A549 (cell line): ENCODE measurements at regions of chr11 and their contacts with region 1.

Region 1: GRCh38 chr11:124758317-124759203 is 3.5 kb downstream of the ESAM start:
- DNase-seq: peak; percentile 77 to 81
- ATAC-seq: peak; percentile 83 to 90
- H3K4me3 ChIP-seq: peak overlapping the region; percentile 52
- H3K27ac ChIP-seq: peak overlapping the region; percentile 72 to 85
- H3K4me1 ChIP-seq: peaks cover 19% of the 10 kb centered on the region
- CTCF ChIP-seq: peak; percentile 58
- EP300 ChIP-seq: no peak
- POLR2A ChIP-seq: no peak
- RAD21 ChIP-seq: peak; percentile 50 to 53; a peak in 4 of 5 replicates

Region 2: GRCh38 chr11:124493016-124493655 is 265.4 kb before region 1 on chr11:
- CTCF ChIA-PET with region 1: no interaction called
- POLR2A ChIA-PET with region 1: no interaction called
- DNase-seq: no peak
- ATAC-seq: no peak
- H3K4me3 ChIP-seq: no peak overlapping the region
- H3K27ac ChIP-seq: no peak overlapping the region
- H3K4me1 ChIP-seq: no peaks in the 10 kb centered on the region
- CTCF ChIP-seq: no peak
- EP300 ChIP-seq: no peak
- POLR2A ChIP-seq: no peak
- RAD21 ChIP-seq: no peak

Region 3: DNA sequence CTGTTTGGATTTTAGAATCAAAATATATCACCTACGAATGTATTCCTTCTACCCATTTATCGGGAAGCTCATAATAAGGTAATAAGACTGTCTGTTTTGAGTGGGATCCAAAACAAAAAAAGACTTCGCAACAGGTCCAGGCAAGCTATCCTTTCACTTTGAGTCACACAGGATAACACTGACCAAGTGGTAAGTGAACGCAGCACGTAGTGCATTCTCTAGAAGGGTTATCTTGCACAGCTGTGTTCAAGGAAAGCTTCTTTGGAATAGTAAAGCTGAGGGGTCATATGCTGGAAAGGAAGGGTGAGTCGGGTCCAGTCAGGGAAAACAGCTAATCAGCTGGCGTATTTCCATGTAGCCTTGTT is 41.2 kb before region 1 on chr11:
- CTCF ChIA-PET with region 1: no interaction called
- POLR2A ChIA-PET with region 1: no interaction called
- DNase-seq: no peak
- ATAC-seq: no peak; a peak in 1 of 6 replicates
- H3K4me3 ChIP-seq: no peak overlapping the region
- H3K27ac ChIP-seq: no peak overlapping the region
- H3K4me1 ChIP-seq: no peaks in the 10 kb centered on the region
- CTCF ChIP-seq: no peak
- EP300 ChIP-seq: no peak
- POLR2A ChIP-seq: no peak
- RAD21 ChIP-seq: no peak

Region 4: DNA sequence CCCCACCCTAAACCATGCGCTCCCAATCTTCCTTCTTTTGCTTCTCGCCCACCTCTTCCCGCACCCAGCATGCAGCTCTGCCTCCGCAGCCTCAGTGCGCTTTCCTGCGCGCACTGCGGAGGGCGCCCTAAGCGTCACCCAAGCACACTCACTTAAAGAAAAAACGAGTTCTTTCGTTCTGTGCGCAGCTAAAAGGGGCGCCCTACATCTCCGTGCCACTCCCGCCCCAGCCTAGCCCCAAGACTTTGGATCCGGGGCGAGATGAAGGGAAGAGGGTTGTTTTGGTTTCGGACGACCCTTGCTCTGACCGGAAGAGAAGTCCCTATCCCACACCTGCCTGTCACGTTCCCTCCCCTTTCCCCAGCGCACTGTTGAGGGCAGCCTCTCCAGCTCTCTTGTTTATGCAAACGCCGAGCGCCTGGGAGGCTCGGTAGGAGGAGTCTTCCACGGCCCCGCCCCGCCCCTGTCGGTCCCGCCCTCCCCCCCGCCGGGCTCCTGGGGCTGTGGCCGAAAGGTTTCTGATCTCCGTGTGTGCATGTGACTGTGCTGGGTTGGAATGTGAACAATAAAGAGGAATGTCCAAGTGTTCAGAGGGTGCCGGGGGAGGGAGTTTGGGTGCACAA is 11.8 kb before region 1 on chr11:
- CTCF ChIA-PET with region 1: interaction called, 39 read pairs
- POLR2A ChIA-PET with region 1: interaction called, 9 read pairs
- DNase-seq: peak; percentile 84 to 85
- ATAC-seq: peak; percentile 89 to 92
- H3K4me3 ChIP-seq: peak overlapping the region; percentile 66
- H3K27ac ChIP-seq: peak overlapping the region; percentile 79 to 93
- H3K4me1 ChIP-seq: peaks cover 6% of the 10 kb centered on the region; the same call in 2 of the 3 replicates
- CTCF ChIP-seq: peak; percentile 57
- EP300 ChIP-seq: no peak
- POLR2A ChIP-seq: no peak
- RAD21 ChIP-seq: peak in 1 of 2 experiments; percentile 21; a peak in 3 of 5 replicates

Region 5: GRCh38 chr11:124778281-124778680 is 19.7 kb after region 1 on chr11:
- CTCF ChIA-PET with region 1: interaction called, 13 read pairs
- POLR2A ChIA-PET with region 1: no interaction called
- DNase-seq: peak; percentile 21 to 25
- ATAC-seq: peak; percentile 50 to 60; a peak in 2 of 6 replicates
- H3K4me3 ChIP-seq: no peak overlapping the region
- H3K27ac ChIP-seq: no peak overlapping the region
- H3K4me1 ChIP-seq: no peaks in the 10 kb centered on the region
- CTCF ChIP-seq: 0 out of 3 replicates have a peak, but pooled peaks have one; percentile 10
- EP300 ChIP-seq: no peak
- POLR2A ChIP-seq: no peak
- RAD21 ChIP-seq: no peak

Region 6: GRCh38 chr11:124793466-124794278 is 35.1 kb after region 1 on chr11:
- CTCF ChIA-PET with region 1: interaction called, 45 read pairs
- POLR2A ChIA-PET with region 1: no interaction called
- DNase-seq: peak; percentile 40 to 62
- ATAC-seq: peak; percentile 59 to 88; a peak in 4 of 6 replicates
- H3K4me3 ChIP-seq: no peak overlapping the region
- H3K27ac ChIP-seq: no peak overlapping the region
- H3K4me1 ChIP-seq: peaks cover 31% of the 10 kb centered on the region
- CTCF ChIP-seq: peak; percentile 70
- EP300 ChIP-seq: no peak
- POLR2A ChIP-seq: no peak
- RAD21 ChIP-seq: peak; percentile 65 to 72

Region 7: GRCh38 chr11:124865921-124866583 is 107.5 kb after region 1 on chr11:
- CTCF ChIA-PET with region 1: interaction called, 11 read pairs
- POLR2A ChIA-PET with region 1: no interaction called
- DNase-seq: peak in 1 of 2 experiments; percentile 64
- ATAC-seq: peak; percentile 30 to 75; a peak in 3 of 6 replicates
- H3K4me3 ChIP-seq: peak overlapping the region; percentile 40
- H3K27ac ChIP-seq: no peak overlapping the region
- H3K4me1 ChIP-seq: peaks cover 14% of the 10 kb centered on the region; the same call in 2 of the 3 replicates
- CTCF ChIP-seq: peak; percentile 61
- EP300 ChIP-seq: no peak
- POLR2A ChIP-seq: no peak
- RAD21 ChIP-seq: peak; percentile 22 to 27; a peak in 1 of 5 replicates